ENCODE measurements at regions of chr5 and their contacts with region 1.

Region 1: GRCh38 chr5:141757402-141757801 is 75.4 kb upstream of the ARAP3 start:
- DNase-seq: peak; percentile 80
- H3K4me3 ChIP-seq: no peak overlapping the region; a peak in 1 of 4 replicates
- H3K27ac ChIP-seq: no peak overlapping the region
- H3K4me1 ChIP-seq: peaks cover 0 to 27% of the 10 kb centered on the region in 2 experiments; a peak in 1 of 4 replicates
- H3K27me3 ChIP-seq: peaks cover under 1% of the 10 kb centered on the region
- CTCF ChIP-seq: peak; percentile 50
- EP300 ChIP-seq: no peak
- RAD21 ChIP-seq: peak; percentile 70

Region 2: DNA sequence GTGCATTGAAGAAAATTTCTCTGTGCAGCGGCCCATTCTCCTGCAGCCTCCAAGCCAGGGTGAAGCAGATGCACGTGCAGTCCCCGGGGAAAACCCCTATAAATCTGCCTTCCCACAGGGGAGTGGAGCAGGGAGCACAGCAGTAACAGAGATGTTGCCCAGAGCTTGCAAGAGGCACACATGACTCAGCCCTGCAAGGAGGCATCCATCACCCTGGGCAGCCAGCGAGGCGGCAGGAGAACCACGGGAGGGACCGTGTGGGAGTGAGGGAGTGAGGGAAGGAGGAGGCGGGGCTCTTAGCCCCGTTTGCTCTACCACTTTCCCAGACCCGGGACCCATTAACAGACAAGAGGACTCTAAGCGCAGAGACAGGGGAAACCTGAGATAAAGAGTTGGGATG is 20.8 kb after region 1 on chr5:
- CTCF ChIA-PET with region 1: interaction called, 15 read pairs
- POLR2A ChIA-PET with region 1: no interaction called
- DNase-seq: no peak
- H3K4me3 ChIP-seq: no peak overlapping the region
- H3K27ac ChIP-seq: no peak overlapping the region
- H3K4me1 ChIP-seq: no peaks in the 10 kb centered on the region; a peak in 2 of 4 replicates
- H3K27me3 ChIP-seq: no peaks in the 10 kb centered on the region; the same call in 1 of the 2 replicates
- CTCF ChIP-seq: no peak
- EP300 ChIP-seq: no peak
- RAD21 ChIP-seq: no peak

Region 3: GRCh38 chr5:141805874-141806595 is 48.6 kb after region 1 on chr5:
- CTCF ChIA-PET with region 1: interaction called, 11 read pairs
- POLR2A ChIA-PET with region 1: no interaction called
- DNase-seq: no peak
- H3K4me3 ChIP-seq: no peak overlapping the region
- H3K27ac ChIP-seq: no peak overlapping the region
- H3K4me1 ChIP-seq: peaks cover 0 to 9% of the 10 kb centered on the region in 2 experiments; a peak in 1 of 4 replicates
- H3K27me3 ChIP-seq: peaks cover 52% of the 10 kb centered on the region
- CTCF ChIP-seq: no peak
- EP300 ChIP-seq: no peak
- RAD21 ChIP-seq: no peak

Measured in SK-N-SH (cell line).